PC-9 (cell line): ENCODE measurements at regions of chr5 and their contacts with region 1.

Region 1: GRCh38 chr5:32232441-32233219 is 58.5 kb upstream of the GOLPH3 start:
- DNase-seq: peak; percentile 67 to 92
- H3K4me3 ChIP-seq: no peak overlapping the region
- H3K27ac ChIP-seq: no peak overlapping the region
- H3K4me1 ChIP-seq: peaks cover 8% of the 10 kb centered on the region; the same call in 1 of the 2 replicates
- H3K27me3 ChIP-seq: no peaks in the 10 kb centered on the region
- CTCF ChIP-seq: peak; percentile 98

Region 2: DNA sequence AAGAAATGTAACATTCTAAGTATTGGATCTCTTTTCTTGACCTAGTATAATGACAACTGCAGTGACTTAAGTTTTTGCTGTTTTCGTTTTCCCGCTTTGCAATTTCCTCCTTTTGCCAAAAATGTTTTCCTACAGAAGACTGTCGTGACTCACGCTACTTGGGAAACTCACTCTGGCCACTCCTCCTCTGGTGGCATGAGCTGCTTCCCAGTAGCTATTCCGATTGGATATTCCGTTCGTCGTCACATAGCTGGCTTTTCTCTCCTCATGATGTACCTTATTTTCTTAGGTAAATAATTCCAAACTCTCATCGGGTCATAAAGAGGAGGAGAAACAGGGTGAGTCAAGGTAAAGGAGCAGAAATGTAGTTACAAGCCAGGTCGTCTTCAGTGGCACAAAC is 123.4 kb before region 1 on chr5:
- CTCF ChIA-PET with region 1: no interaction called
- POLR2A ChIA-PET with region 1: no interaction called
- intact Hi-C with region 1: loop called (anchors 5 kb)
- DNase-seq: no peak
- H3K4me3 ChIP-seq: no peak overlapping the region
- H3K27ac ChIP-seq: no peak overlapping the region
- H3K4me1 ChIP-seq: no peaks in the 10 kb centered on the region
- H3K27me3 ChIP-seq: no peaks in the 10 kb centered on the region
- CTCF ChIP-seq: no peak

Region 3: GRCh38 chr5:32202394-32202793 is 30.2 kb before region 1 on chr5:
- CTCF ChIA-PET with region 1: interaction called, 19 read pairs
- POLR2A ChIA-PET with region 1: no interaction called
- intact Hi-C with region 1: no loop called
- DNase-seq: no peak
- H3K4me3 ChIP-seq: no peak overlapping the region
- H3K27ac ChIP-seq: no peak overlapping the region
- H3K4me1 ChIP-seq: peaks cover 41% of the 10 kb centered on the region
- H3K27me3 ChIP-seq: no peaks in the 10 kb centered on the region
- CTCF ChIP-seq: no peak

Region 4: DNA sequence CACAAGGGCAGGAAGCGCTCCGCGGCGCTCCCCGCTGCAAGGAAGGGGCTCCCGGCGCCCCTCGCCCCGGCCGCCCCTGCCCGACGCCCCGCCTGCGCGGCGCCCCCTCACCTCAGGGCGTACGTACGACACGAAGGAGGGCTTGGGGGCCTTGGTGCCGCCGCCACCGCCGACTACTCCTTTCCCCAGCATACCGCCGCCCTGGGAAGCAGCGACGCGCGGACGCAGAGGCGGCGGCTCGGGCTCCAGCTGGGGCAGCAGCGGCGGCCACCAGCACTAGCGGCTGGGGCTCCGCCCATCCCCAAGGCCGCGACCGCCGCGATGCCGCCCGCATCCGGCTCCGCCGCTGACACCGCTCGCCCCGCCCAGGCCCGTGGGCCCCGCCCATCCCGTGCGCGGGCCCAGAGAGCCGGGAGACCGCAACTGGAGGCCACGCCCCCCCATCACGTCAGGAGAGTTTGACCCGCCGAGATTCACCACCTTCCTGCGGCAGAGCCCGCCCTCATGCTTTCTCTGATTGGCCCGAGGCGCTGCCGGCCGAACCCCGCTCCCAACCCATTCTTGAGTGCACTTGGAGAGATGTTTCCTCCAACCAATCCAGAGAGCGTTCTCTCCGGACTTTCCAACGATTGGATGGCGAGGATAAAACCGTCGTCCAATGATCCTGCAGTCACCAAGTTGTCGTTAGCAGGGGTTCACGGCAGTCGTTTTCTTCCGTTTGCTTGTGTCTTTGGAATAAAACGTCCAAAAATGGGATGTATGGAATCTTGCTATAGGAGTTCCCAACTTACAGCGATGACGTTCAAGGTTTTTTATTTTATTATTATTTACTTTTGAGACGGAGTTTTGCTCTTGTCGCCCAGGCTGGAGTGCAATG is 80.3 kb after region 1 on chr5 and contains the start of gene MTMR12:
- CTCF ChIA-PET with region 1: no interaction called
- POLR2A ChIA-PET with region 1: no interaction called
- intact Hi-C with region 1: loop called (anchors 1 kb)
- DNase-seq: peak; percentile 99 to 100
- H3K4me3 ChIP-seq: peak within 1 kb of the TSS; percentile 91
- H3K27ac ChIP-seq: peak within 1 kb of the TSS; percentile 14
- H3K4me1 ChIP-seq: peaks cover 10% of the 10 kb centered on the region
- H3K27me3 ChIP-seq: no peaks in the 10 kb centered on the region
- CTCF ChIP-seq: no peak
- total RNA-seq, gene MTMR12: 44.5 and 47.5 TPM in 2 replicates

Region 5: GRCh38 chr5:32613050-32613672 is 380.5 kb after region 1 on chr5:
- CTCF ChIA-PET with region 1: interaction called, 6 read pairs
- POLR2A ChIA-PET with region 1: no interaction called
- intact Hi-C with region 1: loop called (anchors 1 kb)
- DNase-seq: peak; percentile 62 to 86
- H3K4me3 ChIP-seq: no peak overlapping the region
- H3K27ac ChIP-seq: no peak overlapping the region
- H3K4me1 ChIP-seq: no peaks in the 10 kb centered on the region
- H3K27me3 ChIP-seq: no peaks in the 10 kb centered on the region
- CTCF ChIP-seq: peak; percentile 100